Heart right ventricle (tissue), 16 donors: ENCODE measurements at regions of chr7 and their contacts with region 1.

Region 1: DNA sequence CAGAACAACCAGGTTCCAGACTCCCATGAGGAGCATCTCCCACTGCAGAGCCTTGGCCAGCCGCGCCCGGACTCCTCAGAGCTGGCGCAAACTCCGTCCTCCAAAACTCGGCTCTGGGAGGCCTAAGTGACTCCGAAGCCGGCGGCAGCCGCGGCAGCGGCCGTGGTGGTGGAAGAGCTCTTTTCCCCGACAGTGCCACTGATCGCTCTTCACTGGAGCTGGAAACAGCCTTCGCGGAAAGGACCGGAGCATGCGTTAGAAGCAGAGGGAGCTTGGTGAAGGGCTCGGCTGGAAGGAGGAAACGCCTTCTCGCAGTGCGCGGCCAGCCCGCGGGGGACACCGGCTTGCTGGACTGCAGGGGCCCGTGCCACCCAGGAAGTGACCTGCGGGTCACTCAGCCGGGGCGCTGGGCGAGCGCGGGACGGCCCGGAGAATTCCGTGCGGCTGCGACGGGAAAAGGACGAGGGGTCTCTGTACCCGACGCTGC is 5.0 kb upstream of the HOXA13 start:
- DNase-seq: no peak
- ATAC-seq: peak in 1 of 8 donors; percentile 34
- H3K4me3 ChIP-seq: peak overlapping the region in 3 of 10 donors; percentile 10 to 33 (median 10)
- H3K27ac ChIP-seq: no peak overlapping the region
- H3K4me1 ChIP-seq: peaks cover 0 to 38% (median 23%) of the 10 kb centered on the region in 9 donors
- H3K27me3 ChIP-seq: peaks cover 53 to 100% (median 99%) of the 10 kb centered on the region in 7 donors
- CTCF ChIP-seq: no peak

Region 2: GRCh38 chr7:27901028-27901760 is 696.3 kb after region 1 on chr7:
- intact Hi-C with region 1: loop called in 1 of 10 experiments (anchors 5 kb)
- DNase-seq: no peak
- ATAC-seq: peak in 3 of 8 donors; percentile 22 to 59 (median 44)
- H3K4me3 ChIP-seq: peak overlapping the region in 6 of 10 donors; percentile 6 to 43 (median 30)
- H3K27ac ChIP-seq: peak overlapping the region in 5 of 10 donors; percentile 15 to 83 (median 35)
- H3K4me1 ChIP-seq: peaks cover 0 to 54% (median 16%) of the 10 kb centered on the region in 9 donors
- H3K27me3 ChIP-seq: no peaks in the 10 kb centered on the region
- CTCF ChIP-seq: no peak